WTC11 (cell line): ENCODE measurements at regions of chr5 and their contacts with region 1.

Region 1: GRCh38 chr5:94832685-94833084 is 214.2 kb downstream of the SLF1 start:
- DNase-seq: no peak
- ATAC-seq: peak; percentile 66
- H3K4me3 Mint-ChIP-seq: no peak overlapping the region
- H3K27ac Mint-ChIP-seq: no peak overlapping the region
- H3K4me1 Mint-ChIP-seq: peaks cover 15% of the 10 kb centered on the region
- H3K27me3 Mint-ChIP-seq: no peaks in the 10 kb centered on the region
- CTCF ChIP-seq: no peak

Region 2: DNA sequence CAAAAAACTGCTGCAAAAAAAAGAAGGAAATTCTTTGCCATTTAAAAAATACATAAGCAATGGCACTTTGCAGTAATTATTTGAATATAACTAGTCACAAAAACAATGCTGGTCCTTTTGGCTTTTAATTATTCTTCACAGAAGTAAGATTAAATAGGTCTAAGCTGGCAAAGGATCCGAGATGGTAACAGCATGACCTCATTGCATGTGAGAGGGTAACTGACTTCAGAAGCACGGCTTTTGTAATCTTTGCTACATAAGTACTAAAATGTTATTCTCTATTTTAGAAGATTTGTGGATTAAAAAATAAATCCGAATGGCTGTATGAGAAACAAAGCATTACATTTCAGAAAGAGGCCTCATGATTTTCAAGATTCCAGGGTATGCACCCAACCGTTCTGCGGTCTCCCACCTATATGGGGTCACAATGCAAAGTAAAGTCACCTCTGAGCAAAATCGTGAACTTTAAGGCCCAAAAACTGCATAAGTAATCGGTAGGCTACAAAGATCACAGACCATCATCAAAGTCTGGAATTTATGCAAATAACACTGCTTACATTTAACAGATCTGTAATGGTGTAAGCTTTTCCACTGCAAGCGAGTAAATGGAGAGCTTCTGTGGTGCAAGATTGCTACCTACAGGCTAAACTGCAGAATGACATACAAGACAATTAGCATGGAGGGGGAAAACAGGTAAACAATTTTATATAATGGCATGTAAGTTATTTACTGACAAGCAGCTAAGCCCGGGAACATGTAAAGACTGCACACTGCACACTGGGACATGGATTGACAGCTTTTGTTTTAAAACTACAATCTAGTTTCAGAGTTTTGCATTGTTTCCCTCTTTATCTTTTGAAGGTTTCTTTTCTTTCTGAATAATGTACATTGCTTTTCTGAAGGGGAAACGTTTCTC is 17.4 kb after region 1 on chr5:
- CTCF ChIA-PET with region 1: interaction called, 13 read pairs
- POLR2A ChIA-PET with region 1: no interaction called
- DNase-seq: no peak
- ATAC-seq: peak; percentile 88
- H3K4me3 Mint-ChIP-seq: no peak overlapping the region
- H3K27ac Mint-ChIP-seq: no peak overlapping the region; the same call in 1 of the 2 replicates
- H3K4me1 Mint-ChIP-seq: peaks cover 47% of the 10 kb centered on the region
- H3K27me3 Mint-ChIP-seq: no peaks in the 10 kb centered on the region
- CTCF ChIP-seq: peak; percentile 68

Region 3: GRCh38 chr5:94893412-94894135 is 60.9 kb after region 1 on chr5:
- CTCF ChIA-PET with region 1: interaction called, 10 read pairs
- POLR2A ChIA-PET with region 1: no interaction called
- DNase-seq: no peak
- ATAC-seq: peak; percentile 93
- H3K4me3 Mint-ChIP-seq: no peak overlapping the region
- H3K27ac Mint-ChIP-seq: no peak overlapping the region
- H3K4me1 Mint-ChIP-seq: peaks cover 8% of the 10 kb centered on the region; the same call in 1 of the 2 replicates
- H3K27me3 Mint-ChIP-seq: no peaks in the 10 kb centered on the region
- CTCF ChIP-seq: no peak